SK-N-SH (cell line): ENCODE measurements at regions of chr9 and their contacts with region 1.

Region 1: GRCh38 chr9:107425101-107426045 is 64.2 kb downstream of the KLF4 start:
- DNase-seq: peak; percentile 74
- H3K4me3 ChIP-seq: peak overlapping the region in 1 of 2 experiments; percentile 39; a peak in 1 of 4 replicates
- H3K27ac ChIP-seq: no peak overlapping the region
- H3K4me1 ChIP-seq: peaks cover 0 to 2% of the 10 kb centered on the region in 2 experiments; a peak in 1 of 4 replicates
- H3K27me3 ChIP-seq: no peaks in the 10 kb centered on the region
- CTCF ChIP-seq: peak; percentile 81
- EP300 ChIP-seq: no peak
- RAD21 ChIP-seq: peak; percentile 39; the same call in 1 of the 2 replicates

Region 2: DNA sequence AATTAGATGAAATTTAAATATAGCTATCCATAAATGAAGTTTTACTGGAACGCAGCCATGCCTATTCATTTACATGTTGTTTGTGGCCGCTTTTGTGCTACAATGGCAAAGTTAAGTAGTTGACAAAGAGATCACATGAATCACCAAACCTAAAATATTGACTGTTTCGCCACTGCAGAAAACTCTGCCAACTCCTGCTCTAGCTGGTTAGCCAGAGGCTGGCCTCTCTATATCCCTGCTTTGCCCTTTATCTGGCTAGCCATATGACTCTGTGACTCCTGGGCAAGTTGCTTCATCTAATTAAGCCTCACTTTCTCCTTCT is 27.7 kb before region 1 on chr9:
- CTCF ChIA-PET with region 1: interaction called, 18 read pairs
- POLR2A ChIA-PET with region 1: no interaction called
- DNase-seq: no peak
- H3K4me3 ChIP-seq: no peak overlapping the region
- H3K27ac ChIP-seq: no peak overlapping the region
- H3K4me1 ChIP-seq: no peaks in the 10 kb centered on the region
- H3K27me3 ChIP-seq: no peaks in the 10 kb centered on the region
- CTCF ChIP-seq: no peak
- EP300 ChIP-seq: no peak
- RAD21 ChIP-seq: no peak

Region 3: DNA sequence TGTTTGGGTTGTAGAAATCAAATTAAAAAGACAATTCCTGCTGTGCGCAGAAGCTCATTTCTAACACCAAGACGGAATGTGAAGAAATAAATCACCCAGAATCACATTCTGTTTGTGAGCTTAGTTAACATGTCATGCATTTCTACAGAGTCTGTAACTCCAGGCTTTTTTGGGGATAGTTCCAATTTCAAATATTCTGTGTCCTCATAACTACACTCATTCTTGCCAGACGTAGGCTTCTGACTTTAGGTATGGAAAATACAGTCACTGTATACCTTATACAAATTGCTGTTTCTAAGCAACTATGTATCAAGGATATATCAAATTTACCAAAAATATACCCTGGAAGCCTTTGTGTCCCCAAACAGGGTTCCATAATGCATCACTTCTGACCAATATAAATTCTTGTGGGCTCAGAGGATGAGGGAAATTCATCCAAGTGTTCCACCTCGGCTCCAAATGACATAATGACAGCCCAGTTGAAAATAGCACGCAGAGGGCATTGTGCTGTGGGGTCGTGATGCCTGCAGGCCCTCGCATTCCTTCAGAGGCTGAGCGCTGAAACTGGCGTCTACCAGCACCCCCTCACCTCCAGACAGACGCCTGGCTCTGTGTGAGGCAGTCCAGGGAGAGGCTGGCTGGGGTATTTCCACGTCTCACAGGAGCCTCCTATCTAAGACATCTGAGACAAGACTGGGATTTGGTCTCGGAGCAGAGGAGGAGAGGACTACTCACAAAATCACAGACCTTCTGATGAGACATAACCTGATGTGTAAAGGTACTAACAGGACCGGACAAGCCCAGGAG is 15.6 kb before region 1 on chr9:
- CTCF ChIA-PET with region 1: interaction called, 50 read pairs
- POLR2A ChIA-PET with region 1: no interaction called
- DNase-seq: no peak
- H3K4me3 ChIP-seq: no peak overlapping the region
- H3K27ac ChIP-seq: no peak overlapping the region
- H3K4me1 ChIP-seq: no peaks in the 10 kb centered on the region; a peak in 1 of 4 replicates
- H3K27me3 ChIP-seq: no peaks in the 10 kb centered on the region; the same call in 1 of the 2 replicates
- CTCF ChIP-seq: no peak
- EP300 ChIP-seq: no peak
- RAD21 ChIP-seq: no peak

Region 4: DNA sequence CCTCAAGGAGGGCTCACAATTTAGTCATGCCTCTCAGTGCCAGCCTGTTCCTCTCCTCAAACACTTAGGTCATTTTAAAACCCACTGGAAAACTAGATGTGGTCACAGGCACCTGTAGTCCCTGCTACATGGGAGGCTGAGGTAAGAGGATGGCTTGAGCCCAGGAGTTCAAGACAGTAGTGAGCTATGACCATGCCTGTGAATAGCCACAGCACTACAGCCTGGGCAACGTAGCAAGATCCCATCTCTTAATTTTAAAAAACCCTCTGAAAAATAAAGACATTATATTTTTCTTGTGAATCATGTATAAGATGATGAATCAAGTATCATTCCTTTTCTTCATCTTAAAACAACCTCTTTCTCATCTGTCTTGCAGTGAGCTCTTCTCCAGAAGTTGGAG is 18.4 kb after region 1 on chr9:
- CTCF ChIA-PET with region 1: interaction called, 36 read pairs
- POLR2A ChIA-PET with region 1: no interaction called
- DNase-seq: no peak
- H3K4me3 ChIP-seq: no peak overlapping the region
- H3K27ac ChIP-seq: no peak overlapping the region
- H3K4me1 ChIP-seq: no peaks in the 10 kb centered on the region
- H3K27me3 ChIP-seq: no peaks in the 10 kb centered on the region; the same call in 1 of the 2 replicates
- CTCF ChIP-seq: no peak
- EP300 ChIP-seq: no peak
- RAD21 ChIP-seq: no peak

Region 5: GRCh38 chr9:107866711-107867311 is 441.4 kb after region 1 on chr9:
- CTCF ChIA-PET with region 1: no interaction called
- POLR2A ChIA-PET with region 1: no interaction called
- DNase-seq: no peak
- H3K4me3 ChIP-seq: no peak overlapping the region
- H3K27ac ChIP-seq: no peak overlapping the region
- H3K4me1 ChIP-seq: no peaks in the 10 kb centered on the region
- H3K27me3 ChIP-seq: peaks cover 4% of the 10 kb centered on the region; the same call in 1 of the 2 replicates
- CTCF ChIP-seq: no peak
- EP300 ChIP-seq: no peak
- RAD21 ChIP-seq: no peak

Region 6: DNA sequence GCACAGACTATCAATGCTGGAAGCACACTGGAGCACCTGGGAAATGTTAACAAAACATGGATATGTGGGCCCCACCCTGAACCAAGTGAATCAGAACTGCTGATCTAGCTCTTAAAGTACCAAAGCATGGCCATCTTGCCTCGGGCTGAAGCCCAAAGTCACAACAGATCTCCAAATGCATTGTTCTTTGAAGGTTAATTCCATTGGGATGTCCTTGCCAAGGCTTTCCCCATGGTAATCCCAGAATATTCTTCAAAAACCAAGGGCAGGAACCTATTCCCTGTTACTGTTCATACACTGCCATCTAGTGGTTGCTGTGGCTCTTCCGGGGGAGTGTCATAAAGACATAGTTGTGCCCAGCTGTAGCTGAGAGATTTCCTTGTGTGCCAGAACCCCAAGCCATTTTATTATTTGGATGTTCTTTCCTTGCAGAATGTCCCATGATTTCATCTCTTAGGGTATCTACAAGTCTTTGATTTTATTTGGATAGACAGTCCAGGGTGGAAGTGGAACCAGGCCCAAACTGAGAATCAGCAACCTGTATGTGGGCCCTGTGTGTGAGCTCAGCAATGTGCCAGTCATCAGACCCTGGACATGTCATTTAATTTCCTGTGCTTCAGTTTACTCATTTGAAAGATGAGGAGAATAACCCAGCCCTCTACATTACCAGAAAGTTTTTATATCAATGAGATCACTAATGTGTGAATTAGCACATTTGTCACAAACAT is 1140.4 kb after region 1 on chr9:
- CTCF ChIA-PET with region 1: interaction called, 18 read pairs
- POLR2A ChIA-PET with region 1: no interaction called
- DNase-seq: peak; percentile 52
- H3K4me3 ChIP-seq: no peak overlapping the region; a peak in 1 of 4 replicates
- H3K27ac ChIP-seq: no peak overlapping the region
- H3K4me1 ChIP-seq: no peaks in the 10 kb centered on the region
- H3K27me3 ChIP-seq: peaks cover 8% of the 10 kb centered on the region; the same call in 1 of the 2 replicates
- CTCF ChIP-seq: peak; percentile 94
- EP300 ChIP-seq: no peak
- RAD21 ChIP-seq: peak; percentile 93